CD4-positive, alpha-beta T cell (primary cell): ENCODE measurements at regions of chr13 and their contacts with region 1.

Region 1: GRCh38 chr13:100573121-100573520 is 15.5 kb downstream of the GGACT start:
- DNase-seq: peak; percentile 54 to 90 (median 71)
- ATAC-seq: peak; percentile 81
- H3K4me3 ChIP-seq: no peak overlapping the region
- H3K4me3 Mint-ChIP-seq: no peak overlapping the region
- H3K27ac ChIP-seq: no peak overlapping the region
- H3K27ac Mint-ChIP-seq: no peak overlapping the region
- H3K4me1 ChIP-seq: peaks cover 6% of the 10 kb centered on the region
- H3K4me1 Mint-ChIP-seq: peaks cover 13% of the 10 kb centered on the region
- H3K27me3 ChIP-seq: no peaks in the 10 kb centered on the region
- H3K27me3 Mint-ChIP-seq: no peaks in the 10 kb centered on the region
- CTCF ChIP-seq: peak; percentile 75

Region 2: GRCh38 chr13:98653463-98653985 is 1919.6 kb before region 1 on chr13:
- CTCF ChIA-PET with region 1: no interaction called
- POLR2A ChIA-PET with region 1: no interaction called
- intact Hi-C with region 1: no loop called
- DNase-seq: peak; percentile 52 to 86 (median 67)
- ATAC-seq: peak; percentile 97
- H3K4me3 ChIP-seq: no peak overlapping the region
- H3K4me3 Mint-ChIP-seq: peak overlapping the region; percentile 9
- H3K27ac ChIP-seq: no peak overlapping the region
- H3K27ac Mint-ChIP-seq: no peak overlapping the region
- H3K4me1 ChIP-seq: peaks cover 6% of the 10 kb centered on the region
- H3K4me1 Mint-ChIP-seq: peaks cover 9% of the 10 kb centered on the region
- H3K27me3 ChIP-seq: peaks cover 0 to 2% of the 10 kb centered on the region in 2 experiments
- H3K27me3 Mint-ChIP-seq: no peaks in the 10 kb centered on the region
- CTCF ChIP-seq: peak; percentile 94

Region 3: GRCh38 chr13:100588331-100589177 is 15.4 kb after region 1 on chr13 and contains the start of gene GGACT:
- CTCF ChIA-PET with region 1: interaction called, 57 read pairs
- POLR2A ChIA-PET with region 1: interaction called, 15 read pairs
- intact Hi-C with region 1: loop called (anchors 1 kb)
- DNase-seq: peak; percentile 69 to 92 (median 86)
- ATAC-seq: peak; percentile 92
- H3K4me3 ChIP-seq: peak within 1 kb of the TSS; percentile 67
- H3K4me3 Mint-ChIP-seq: peak within 1 kb of the TSS; percentile 90
- H3K27ac ChIP-seq: peak within 1 kb of the TSS; percentile 72 to 79
- H3K27ac Mint-ChIP-seq: peak within 1 kb of the TSS; percentile 92
- H3K4me1 ChIP-seq: peaks cover 26% of the 10 kb centered on the region
- H3K4me1 Mint-ChIP-seq: peaks cover 51% of the 10 kb centered on the region
- H3K27me3 ChIP-seq: no peaks in the 10 kb centered on the region
- H3K27me3 Mint-ChIP-seq: no peaks in the 10 kb centered on the region
- CTCF ChIP-seq: peak; percentile 71
- total RNA-seq, gene GGACT: 2.4 to 2.9 TPM

Region 4: DNA sequence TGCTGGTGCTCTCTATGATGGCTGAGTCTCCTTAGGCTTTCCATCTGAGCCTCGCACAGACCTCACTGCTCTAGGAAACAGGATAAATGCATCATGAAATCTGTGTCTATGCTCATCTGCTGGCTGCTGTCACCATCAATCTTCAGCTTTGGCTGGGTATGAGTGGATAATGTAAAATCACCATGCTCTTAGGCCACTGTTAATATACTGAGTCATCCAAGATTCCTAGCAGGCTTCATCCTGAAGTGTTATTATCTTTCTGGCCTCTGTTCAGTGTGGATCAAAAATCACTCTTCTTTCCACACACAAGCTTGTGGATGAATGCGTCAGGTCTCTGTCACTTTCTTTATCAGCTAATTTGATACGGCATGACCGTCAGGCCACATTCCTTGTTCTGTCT is 525.8 kb after region 1 on chr13:
- CTCF ChIA-PET with region 1: no interaction called
- POLR2A ChIA-PET with region 1: no interaction called
- intact Hi-C with region 1: loop called in 1 of 2 experiments (anchors 5 kb)
- DNase-seq: no peak
- ATAC-seq: no peak
- H3K4me3 ChIP-seq: no peak overlapping the region
- H3K4me3 Mint-ChIP-seq: no peak overlapping the region
- H3K27ac ChIP-seq: no peak overlapping the region
- H3K27ac Mint-ChIP-seq: no peak overlapping the region
- H3K4me1 ChIP-seq: no peaks in the 10 kb centered on the region
- H3K4me1 Mint-ChIP-seq: no peaks in the 10 kb centered on the region
- H3K27me3 ChIP-seq: peaks cover 0 to under 1% of the 10 kb centered on the region in 2 experiments
- H3K27me3 Mint-ChIP-seq: peaks cover 24% of the 10 kb centered on the region
- CTCF ChIP-seq: no peak

Region 5: GRCh38 chr13:101127741-101128353 is 554.7 kb after region 1 on chr13:
- CTCF ChIA-PET with region 1: interaction called, 4 read pairs
- POLR2A ChIA-PET with region 1: no interaction called
- intact Hi-C with region 1: loop called (anchors 1 kb)
- DNase-seq: peak in 5 of 14 experiments; percentile 1 to 57 (median 34)
- ATAC-seq: peak; percentile 73
- H3K4me3 ChIP-seq: no peak overlapping the region
- H3K4me3 Mint-ChIP-seq: no peak overlapping the region
- H3K27ac ChIP-seq: no peak overlapping the region
- H3K27ac Mint-ChIP-seq: no peak overlapping the region
- H3K4me1 ChIP-seq: no peaks in the 10 kb centered on the region
- H3K4me1 Mint-ChIP-seq: no peaks in the 10 kb centered on the region
- H3K27me3 ChIP-seq: no peaks in the 10 kb centered on the region
- H3K27me3 Mint-ChIP-seq: peaks cover 11% of the 10 kb centered on the region
- CTCF ChIP-seq: peak; percentile 72